ENCODE measurements at regions of chr7 and their contacts with region 1.

Region 1: GRCh38 chr7:106285051-106285854 is 470 bp upstream of the NAMPT start:
- DNase-seq: peak; percentile 97 to 98 (median 98)
- H3K4me3 ChIP-seq: peak overlapping the region; percentile 80
- H3K27ac ChIP-seq: peak overlapping the region; percentile 97
- H3K4me1 ChIP-seq: peaks cover 3% of the 10 kb centered on the region
- H3K27me3 ChIP-seq: no peaks in the 10 kb centered on the region
- CTCF ChIP-seq: no peak
- EP300 ChIP-seq: peak; percentile 95
- POLR2A ChIP-seq: peak; percentile 55

Region 2: DNA sequence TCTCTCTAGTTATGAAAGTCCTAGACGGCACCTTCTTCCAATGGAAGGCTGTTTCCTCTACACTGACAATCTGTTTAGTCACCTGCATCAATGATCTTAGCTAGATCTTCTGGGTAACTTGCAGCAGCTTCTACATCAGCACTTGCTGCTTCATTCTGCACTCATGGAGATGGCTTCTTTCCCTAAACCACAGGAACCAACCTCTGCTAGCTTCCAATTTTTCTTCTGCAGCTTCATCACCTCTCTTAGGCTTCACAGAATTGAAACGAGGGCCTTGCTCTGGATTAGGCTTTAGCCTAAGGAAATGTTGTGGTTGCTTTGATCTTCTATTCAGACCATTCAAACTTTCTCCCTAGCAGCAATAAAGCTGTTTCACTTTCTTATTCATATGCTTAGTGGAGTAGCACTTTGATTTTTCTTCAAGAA is 25.1 kb before region 1 on chr7:
- intact Hi-C with region 1: no loop called
- DNase-seq: no peak
- H3K4me3 ChIP-seq: no peak overlapping the region
- H3K27ac ChIP-seq: no peak overlapping the region
- H3K4me1 ChIP-seq: no peaks in the 10 kb centered on the region
- H3K27me3 ChIP-seq: no peaks in the 10 kb centered on the region
- CTCF ChIP-seq: no peak
- EP300 ChIP-seq: no peak
- POLR2A ChIP-seq: no peak

Region 3: GRCh38 chr7:106421181-106421762 is 136.0 kb after region 1 on chr7:
- intact Hi-C with region 1: loop called in 2 of 4 experiments (anchors 5 kb)
- DNase-seq: peak; percentile 73 to 89 (median 87)
- H3K4me3 ChIP-seq: no peak overlapping the region
- H3K27ac ChIP-seq: peak overlapping the region; percentile 41 to 81
- H3K4me1 ChIP-seq: peaks cover 10% of the 10 kb centered on the region
- H3K27me3 ChIP-seq: no peaks in the 10 kb centered on the region
- CTCF ChIP-seq: no peak
- EP300 ChIP-seq: peak; percentile 82
- POLR2A ChIP-seq: no peak

Region 4: GRCh38 chr7:106461993-106462859 is 177.0 kb after region 1 on chr7:
- intact Hi-C with region 1: loop called in 1 of 4 experiments (anchors 10 kb)
- DNase-seq: no peak
- H3K4me3 ChIP-seq: no peak overlapping the region
- H3K27ac ChIP-seq: no peak overlapping the region
- H3K4me1 ChIP-seq: no peaks in the 10 kb centered on the region
- H3K27me3 ChIP-seq: no peaks in the 10 kb centered on the region
- CTCF ChIP-seq: peak; percentile 30 to 72 (median 50)
- EP300 ChIP-seq: no peak
- POLR2A ChIP-seq: no peak

Region 5: GRCh38 chr7:106812027-106812643 is 526.9 kb after region 1 on chr7:
- intact Hi-C with region 1: no loop called
- DNase-seq: no peak
- H3K4me3 ChIP-seq: no peak overlapping the region
- H3K27ac ChIP-seq: no peak overlapping the region
- H3K4me1 ChIP-seq: no peaks in the 10 kb centered on the region
- H3K27me3 ChIP-seq: no peaks in the 10 kb centered on the region
- CTCF ChIP-seq: no peak
- EP300 ChIP-seq: no peak
- POLR2A ChIP-seq: no peak